CD14-positive monocyte (primary cell): ENCODE measurements at regions of chr6 and their contacts with region 1.

Region 1: GRCh38 chr6:15374119-15374852 is 128.4 kb downstream of the JARID2 start:
- DNase-seq: no peak
- H3K4me3 ChIP-seq: no peak overlapping the region
- H3K4me3 Mint-ChIP-seq: no peak overlapping the region
- H3K27ac ChIP-seq: peak overlapping the region in 1 of 2 donors; percentile 40
- H3K27ac Mint-ChIP-seq: no peak overlapping the region
- H3K4me1 ChIP-seq: peaks cover 18 to 19% of the 10 kb centered on the region in 2 donors
- H3K4me1 Mint-ChIP-seq: peaks cover 44% of the 10 kb centered on the region
- H3K27me3 ChIP-seq: no peaks in the 10 kb centered on the region
- H3K27me3 Mint-ChIP-seq: no peaks in the 10 kb centered on the region
- CTCF ChIP-seq: no peak

Region 2: GRCh38 chr6:13985663-13986325 is 1388.5 kb before region 1 on chr6:
- intact Hi-C with region 1: no loop called
- DNase-seq: peak; percentile 33 to 54 (median 33)
- H3K4me3 ChIP-seq: no peak overlapping the region
- H3K4me3 Mint-ChIP-seq: no peak overlapping the region
- H3K27ac ChIP-seq: no peak overlapping the region
- H3K27ac Mint-ChIP-seq: peak overlapping the region in 1 of 7 donors; percentile 41
- H3K4me1 ChIP-seq: peaks cover 3 to 4% of the 10 kb centered on the region in 2 donors
- H3K4me1 Mint-ChIP-seq: peaks cover 4% of the 10 kb centered on the region
- H3K27me3 ChIP-seq: peaks cover 4 to 5% of the 10 kb centered on the region in 2 donors
- H3K27me3 Mint-ChIP-seq: peaks cover 5 to 17% (median 14%) of the 10 kb centered on the region in 3 donors
- CTCF ChIP-seq: no peak

Region 3: DNA sequence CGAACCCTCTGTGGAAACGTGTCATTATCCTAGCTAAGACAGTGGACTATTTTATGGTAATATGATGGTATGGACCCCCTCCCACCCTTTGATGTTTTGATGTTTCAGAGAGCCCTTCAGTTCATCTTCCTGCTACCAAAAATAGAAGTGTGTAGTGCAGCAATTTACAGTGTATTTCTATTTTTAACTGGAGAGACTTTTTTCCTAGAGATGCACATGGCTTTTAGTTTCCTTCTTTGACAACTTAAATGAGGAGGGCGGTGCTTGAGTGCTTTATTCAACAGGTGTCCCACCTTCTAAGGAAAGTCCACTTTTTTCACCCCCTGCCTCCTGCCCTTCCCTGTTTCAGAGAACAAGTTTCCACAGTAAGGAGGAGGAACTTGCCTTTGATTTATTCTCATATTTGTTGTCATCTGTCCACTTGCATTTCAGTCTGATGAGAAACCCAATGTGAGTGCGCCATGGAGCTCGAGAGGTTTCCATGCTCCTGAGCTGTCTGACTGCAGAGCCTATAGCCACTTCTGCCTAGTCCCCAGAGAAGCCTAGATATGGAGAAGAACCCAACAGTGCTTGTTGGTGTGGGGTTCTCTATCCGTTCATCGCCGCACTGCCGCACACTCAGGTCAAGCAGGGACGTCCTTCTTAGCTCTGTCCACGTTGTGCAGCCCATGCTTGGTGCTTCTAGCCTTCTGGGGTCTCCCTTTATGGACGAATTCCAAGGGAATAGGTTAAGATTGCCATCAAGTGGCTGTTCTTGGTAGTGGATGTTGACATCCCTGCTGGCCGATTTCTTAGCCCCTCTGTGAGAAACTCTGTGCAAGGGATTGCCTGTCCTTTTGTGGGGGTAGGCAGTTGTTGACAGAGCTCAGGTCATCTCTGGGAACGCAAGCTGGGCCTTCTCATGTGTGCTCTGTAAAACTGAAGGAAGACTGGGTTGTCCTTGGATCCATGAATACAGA is 15.8 kb after region 1 on chr6:
- intact Hi-C with region 1: loop called in 1 of 2 experiments (anchors 2 kb)
- DNase-seq: peak in 1 of 3 donors; percentile 30
- H3K4me3 ChIP-seq: no peak overlapping the region
- H3K4me3 Mint-ChIP-seq: peak overlapping the region in 1 of 2 donors; percentile 40
- H3K27ac ChIP-seq: peak overlapping the region; percentile 6 to 71
- H3K27ac Mint-ChIP-seq: peak overlapping the region; percentile 36 to 77 (median 67)
- H3K4me1 ChIP-seq: peaks cover 21 to 28% of the 10 kb centered on the region in 2 donors
- H3K4me1 Mint-ChIP-seq: peaks cover 68% of the 10 kb centered on the region
- H3K27me3 ChIP-seq: no peaks in the 10 kb centered on the region
- H3K27me3 Mint-ChIP-seq: no peaks in the 10 kb centered on the region
- CTCF ChIP-seq: peak; percentile 41

Region 4: GRCh38 chr6:15504581-15505350 is 130.5 kb after region 1 on chr6:
- intact Hi-C with region 1: no loop called
- DNase-seq: no peak
- H3K4me3 ChIP-seq: no peak overlapping the region
- H3K4me3 Mint-ChIP-seq: no peak overlapping the region
- H3K27ac ChIP-seq: peak overlapping the region; percentile 13 to 36
- H3K27ac Mint-ChIP-seq: peak overlapping the region in 6 of 7 donors; percentile 9 to 92 (median 48)
- H3K4me1 ChIP-seq: peaks cover 10 to 20% of the 10 kb centered on the region in 2 donors
- H3K4me1 Mint-ChIP-seq: peaks cover 22% of the 10 kb centered on the region
- H3K27me3 ChIP-seq: no peaks in the 10 kb centered on the region
- H3K27me3 Mint-ChIP-seq: peaks cover 0 to 3% (median 0%) of the 10 kb centered on the region in 3 donors
- CTCF ChIP-seq: no peak